ENCODE measurements at regions of chr1 and their contacts with region 1.

Region 1: GRCh38 chr1:65419681-65420589 is 533 bp upstream of the LEPR start:
- DNase-seq: peak; percentile 96 to 97
- H3K4me3 ChIP-seq: peak overlapping the region; percentile 86
- H3K4me3 Mint-ChIP-seq: no peak overlapping the region
- H3K27ac Mint-ChIP-seq: peak overlapping the region; percentile 82
- H3K4me1 ChIP-seq: peaks cover 31% of the 10 kb centered on the region
- H3K4me1 Mint-ChIP-seq: peaks cover 25% of the 10 kb centered on the region
- H3K27me3 ChIP-seq: no peaks in the 10 kb centered on the region
- H3K27me3 Mint-ChIP-seq: no peaks in the 10 kb centered on the region
- CTCF ChIP-seq: no peak

Region 2: GRCh38 chr1:65059930-65060538 is 359.9 kb before region 1 on chr1:
- CTCF ChIA-PET with region 1: no interaction called
- POLR2A ChIA-PET with region 1: no interaction called
- intact Hi-C with region 1: loop called (anchors 5 kb)
- DNase-seq: no peak
- H3K4me3 ChIP-seq: no peak overlapping the region
- H3K4me3 Mint-ChIP-seq: no peak overlapping the region
- H3K27ac Mint-ChIP-seq: no peak overlapping the region
- H3K4me1 ChIP-seq: no peaks in the 10 kb centered on the region
- H3K4me1 Mint-ChIP-seq: no peaks in the 10 kb centered on the region
- H3K27me3 ChIP-seq: no peaks in the 10 kb centered on the region
- H3K27me3 Mint-ChIP-seq: no peaks in the 10 kb centered on the region
- CTCF ChIP-seq: peak; percentile 22 to 24

Region 3: GRCh38 chr1:65254319-65255034 is 165.5 kb before region 1 on chr1:
- CTCF ChIA-PET with region 1: no interaction called
- POLR2A ChIA-PET with region 1: interaction called, 5 read pairs
- intact Hi-C with region 1: loop called (anchors 1 kb)
- DNase-seq: peak; percentile 74 to 88
- H3K4me3 ChIP-seq: peak overlapping the region; percentile 70
- H3K4me3 Mint-ChIP-seq: peak overlapping the region; percentile 98
- H3K27ac Mint-ChIP-seq: peak overlapping the region; percentile 85
- H3K4me1 ChIP-seq: no peaks in the 10 kb centered on the region
- H3K4me1 Mint-ChIP-seq: peaks cover 14% of the 10 kb centered on the region
- H3K27me3 ChIP-seq: no peaks in the 10 kb centered on the region
- H3K27me3 Mint-ChIP-seq: no peaks in the 10 kb centered on the region
- CTCF ChIP-seq: peak in 1 of 2 experiments; percentile 8

Region 4: DNA sequence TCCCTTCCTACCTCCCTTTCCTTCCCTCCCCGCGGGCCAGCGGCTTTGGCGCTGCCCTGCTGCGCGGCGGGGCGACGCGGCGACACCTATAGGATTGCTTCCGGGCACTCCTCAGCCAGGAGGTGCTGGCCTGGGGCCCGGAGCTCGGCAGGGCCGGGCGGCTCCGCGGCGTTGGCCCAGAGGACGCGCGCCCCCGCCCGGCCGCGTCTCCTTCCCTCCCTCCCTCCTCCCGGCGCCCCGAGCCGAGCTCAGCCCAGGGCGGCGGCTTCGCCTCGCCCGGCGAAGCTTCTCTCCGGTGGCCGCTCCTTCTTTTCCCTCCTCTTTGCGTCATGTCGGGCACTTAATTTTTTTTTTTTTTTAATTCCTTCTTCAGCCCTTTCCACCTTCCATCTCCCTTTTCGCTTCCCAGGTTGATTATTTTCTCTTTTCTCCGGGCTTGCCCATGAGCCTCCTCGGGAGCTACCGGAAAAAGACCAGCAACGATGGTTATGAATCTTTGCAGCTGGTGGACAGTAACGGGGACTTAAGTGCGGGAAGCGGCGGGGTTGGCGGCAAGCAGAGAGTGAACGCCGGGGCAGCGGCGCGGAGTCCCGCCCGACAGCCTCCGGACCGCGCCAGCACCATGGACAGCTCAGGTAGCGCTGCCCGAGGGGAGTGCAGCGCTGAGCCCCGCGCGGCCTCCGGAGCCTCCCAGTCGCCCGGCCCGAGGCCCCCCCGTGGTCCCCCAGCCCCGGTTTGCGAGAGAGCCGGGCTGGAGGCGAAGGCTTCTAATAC is 110.4 kb before region 1 on chr1 and contains the start of gene DNAJC6:
- CTCF ChIA-PET with region 1: interaction called, 6 read pairs
- POLR2A ChIA-PET with region 1: interaction called, 7 read pairs
- intact Hi-C with region 1: loop called (anchors 2 kb)
- DNase-seq: peak; percentile 57 to 85
- H3K4me3 ChIP-seq: peak within 1 kb of the TSS; percentile 41
- H3K4me3 Mint-ChIP-seq: peak within 1 kb of the TSS; percentile 71
- H3K27ac Mint-ChIP-seq: no peak within 1 kb of the TSS
- H3K4me1 ChIP-seq: no peaks in the 10 kb centered on the region; the same call in 1 of the 2 replicates
- H3K4me1 Mint-ChIP-seq: peaks cover 5% of the 10 kb centered on the region
- H3K27me3 ChIP-seq: no peaks in the 10 kb centered on the region
- H3K27me3 Mint-ChIP-seq: no peaks in the 10 kb centered on the region
- CTCF ChIP-seq: no peak
- total RNA-seq, gene DNAJC6: 4.0 and 6.2 TPM in 2 replicates

Region 5: GRCh38 chr1:65316233-65316632 is 103.7 kb before region 1 on chr1:
- CTCF ChIA-PET with region 1: interaction called, 11 read pairs
- POLR2A ChIA-PET with region 1: interaction called, 5 read pairs
- intact Hi-C with region 1: no loop called
- DNase-seq: no peak
- H3K4me3 ChIP-seq: no peak overlapping the region
- H3K4me3 Mint-ChIP-seq: no peak overlapping the region
- H3K27ac Mint-ChIP-seq: no peak overlapping the region
- H3K4me1 ChIP-seq: no peaks in the 10 kb centered on the region
- H3K4me1 Mint-ChIP-seq: no peaks in the 10 kb centered on the region
- H3K27me3 ChIP-seq: no peaks in the 10 kb centered on the region
- H3K27me3 Mint-ChIP-seq: no peaks in the 10 kb centered on the region
- CTCF ChIP-seq: no peak

Region 6: DNA sequence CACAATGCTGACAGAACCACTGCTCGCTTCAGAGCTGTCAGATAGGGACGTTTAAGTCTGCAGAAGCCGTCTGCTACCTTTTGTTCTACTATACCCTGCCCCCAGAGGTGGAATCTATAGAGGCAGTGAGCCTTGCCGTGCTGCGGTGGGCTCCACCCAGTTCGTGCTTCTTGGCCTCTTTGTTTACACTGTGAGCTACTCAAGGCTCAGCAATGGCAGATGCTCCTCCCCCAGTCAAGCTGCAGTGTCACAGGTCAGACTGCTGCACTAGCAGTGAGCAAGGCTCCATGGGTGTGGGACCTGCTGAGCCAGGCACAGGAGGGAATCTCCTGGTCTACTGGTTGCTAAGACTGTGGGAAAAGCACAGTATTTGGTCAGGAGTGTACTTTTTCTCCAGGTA is 47.6 kb after region 1 on chr1:
- CTCF ChIA-PET with region 1: no interaction called
- POLR2A ChIA-PET with region 1: no interaction called
- intact Hi-C with region 1: loop called (anchors 5 kb)
- DNase-seq: peak; percentile 77 to 86
- H3K4me3 ChIP-seq: no peak overlapping the region
- H3K4me3 Mint-ChIP-seq: no peak overlapping the region
- H3K27ac Mint-ChIP-seq: no peak overlapping the region
- H3K4me1 ChIP-seq: peaks cover 36% of the 10 kb centered on the region
- H3K4me1 Mint-ChIP-seq: peaks cover 14% of the 10 kb centered on the region
- H3K27me3 ChIP-seq: no peaks in the 10 kb centered on the region
- H3K27me3 Mint-ChIP-seq: no peaks in the 10 kb centered on the region
- CTCF ChIP-seq: no peak

Region 7: DNA sequence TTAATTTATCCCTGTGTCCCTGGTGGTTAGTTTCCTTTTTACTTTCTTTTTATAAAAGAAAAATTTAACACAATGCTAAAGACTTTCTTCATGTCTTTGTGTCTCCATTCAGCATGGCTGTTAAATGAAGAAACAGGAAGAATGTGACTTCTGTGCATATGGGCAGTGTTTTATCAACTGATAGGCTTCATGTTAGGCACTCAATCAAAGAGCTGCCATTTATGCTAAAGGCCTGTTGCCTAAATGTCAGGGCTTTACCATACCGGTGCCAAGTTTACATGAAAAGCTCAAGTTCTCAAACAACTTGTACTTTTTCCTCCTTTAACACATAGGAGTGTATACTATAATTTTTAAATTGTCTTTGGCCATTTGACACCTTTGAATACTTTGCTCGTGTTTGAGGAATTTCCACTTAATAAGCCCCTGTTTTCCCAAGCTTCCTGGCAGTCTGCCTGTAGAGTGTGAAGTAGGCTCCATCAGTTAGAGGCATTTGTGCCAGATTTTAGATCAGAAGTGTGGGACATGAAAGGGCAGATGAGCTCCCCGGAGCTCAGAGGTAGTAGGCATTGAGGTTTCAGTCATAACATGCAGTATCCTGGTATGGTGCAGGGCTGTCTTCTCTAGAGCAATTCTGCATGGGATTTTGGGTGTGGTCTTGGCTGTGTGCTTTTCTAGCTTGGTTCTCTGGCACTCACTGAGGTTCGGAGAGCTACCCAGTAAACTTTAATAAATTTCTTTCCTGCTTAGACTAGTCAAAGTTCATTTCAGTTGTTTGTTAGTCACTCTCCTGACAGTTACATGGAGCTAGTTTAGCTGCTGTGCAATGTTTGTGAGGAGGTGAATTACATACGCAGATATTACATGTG is 119.6 kb after region 1 on chr1:
- CTCF ChIA-PET with region 1: no interaction called
- POLR2A ChIA-PET with region 1: no interaction called
- intact Hi-C with region 1: no loop called
- DNase-seq: no peak
- H3K4me3 ChIP-seq: no peak overlapping the region
- H3K4me3 Mint-ChIP-seq: no peak overlapping the region
- H3K27ac Mint-ChIP-seq: no peak overlapping the region
- H3K4me1 ChIP-seq: no peaks in the 10 kb centered on the region
- H3K4me1 Mint-ChIP-seq: peaks cover 12% of the 10 kb centered on the region
- H3K27me3 ChIP-seq: no peaks in the 10 kb centered on the region
- H3K27me3 Mint-ChIP-seq: no peaks in the 10 kb centered on the region
- CTCF ChIP-seq: no peak